Right ventricle myocardium superior (tissue), 1 donor: ENCODE measurements at regions of chrX and their contacts with region 1.

Region 1: GRCh38 chrX:109714340-109714958 is 18.6 kb downstream of the ACSL4 start:
- DNase-seq: no peak
- ATAC-seq: no peak

Region 2: DNA sequence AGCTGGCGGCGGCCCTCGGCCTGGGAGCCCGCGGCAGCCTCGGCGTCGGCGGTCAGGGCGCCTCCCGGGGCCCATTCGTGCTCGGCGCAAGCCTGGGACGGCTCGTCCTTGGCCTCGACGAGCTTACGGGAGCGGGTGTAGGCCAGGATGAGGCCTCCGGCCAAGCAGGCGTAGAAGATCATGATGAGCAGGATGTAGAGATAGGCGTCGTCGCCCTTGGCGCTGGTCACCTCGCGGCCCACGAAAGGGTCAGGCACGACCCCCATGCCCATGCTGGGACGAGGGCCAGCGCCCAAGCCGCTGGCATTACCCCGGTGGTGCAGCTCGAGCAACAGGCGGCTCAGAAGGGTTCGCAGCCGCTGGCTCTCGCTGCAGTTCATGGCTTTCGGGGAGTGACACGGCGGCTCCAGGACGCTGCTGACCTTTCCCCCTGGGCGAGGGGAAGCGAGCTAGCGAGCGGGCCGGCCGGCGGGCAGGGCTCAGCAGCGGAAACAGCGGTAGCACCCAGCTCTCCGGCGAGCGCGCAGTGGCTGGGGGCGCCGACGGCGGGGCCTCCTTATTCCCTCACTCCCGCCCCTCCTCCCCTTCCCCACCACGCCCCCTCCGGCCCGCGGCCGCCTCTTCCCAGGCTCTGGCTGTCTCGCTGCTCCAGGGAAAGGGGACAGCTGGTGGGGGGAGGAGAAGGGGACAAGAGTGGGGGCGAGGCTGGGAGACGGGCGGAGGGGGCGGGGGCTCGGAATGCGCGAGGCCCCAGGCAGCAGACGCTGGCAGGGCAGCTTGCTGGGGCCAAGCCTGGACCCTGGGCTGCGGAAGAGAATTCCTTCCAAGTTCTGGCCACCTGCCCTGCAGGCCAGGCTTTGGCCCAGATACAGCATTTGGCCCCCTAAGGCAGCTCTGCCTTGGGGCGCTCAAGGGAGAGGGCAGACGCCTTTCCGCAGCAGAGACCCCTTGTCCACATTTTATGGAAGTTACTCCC is 89.5 kb before region 1 on chrX and contains the start of gene KCNE5:
- intact Hi-C with region 1: no loop called
- DNase-seq: peak; percentile 37
- ATAC-seq: peak; percentile 26
- total RNA-seq, gene KCNE5: 0.24 TPM

Region 3: GRCh38 chrX:109856974-109857373 is 142.5 kb after region 1 on chrX:
- intact Hi-C with region 1: loop called (anchors 10 kb)
- DNase-seq: no peak
- ATAC-seq: no peak

Region 4: GRCh38 chrX:109886122-109886761 is 171.8 kb after region 1 on chrX:
- intact Hi-C with region 1: loop called (anchors 10 kb)
- DNase-seq: peak; percentile 39
- ATAC-seq: no peak